Transverse colon (tissue), 4 donors: ENCODE measurements at regions of chr3 and their contacts with region 1.

Region 1: GRCh38 chr3:71201939-71202338 is 381.6 kb downstream of the FOXP1 start:
- DNase-seq: peak; percentile 55
- H3K4me3 ChIP-seq: no peak overlapping the region
- H3K27ac ChIP-seq: peak overlapping the region in 3 of 4 donors; percentile 57 to 84 (median 58)
- H3K4me1 ChIP-seq: peaks cover 8 to 37% (median 17%) of the 10 kb centered on the region in 4 donors
- H3K27me3 ChIP-seq: no peaks in the 10 kb centered on the region
- CTCF ChIP-seq: no peak
- EP300 ChIP-seq: no peak
- POLR2A ChIP-seq: no peak

Region 2: GRCh38 chr3:72996473-72997333 is 1794.8 kb after region 1 on chr3 and contains the start of gene PPP4R2:
- in situ Hi-C with region 1: no loop called
- intact Hi-C with region 1: loop called (anchors 5 kb)
- DNase-seq: peak; percentile 90
- H3K4me3 ChIP-seq: peak within 1 kb of the TSS; percentile 74 to 93 (median 76)
- H3K27ac ChIP-seq: peak within 1 kb of the TSS; percentile 96 to 99 (median 98)
- H3K4me1 ChIP-seq: peaks cover 20 to 49% (median 37%) of the 10 kb centered on the region in 4 donors
- H3K27me3 ChIP-seq: no peaks in the 10 kb centered on the region
- CTCF ChIP-seq: no peak
- EP300 ChIP-seq: no peak
- POLR2A ChIP-seq: peak; percentile 84
- total RNA-seq, gene PPP4R2: 14.5 to 55.6 (median 36.9) TPM